Naive thymus-derived CD4-positive, alpha-beta T cell (primary cell): ENCODE measurements at regions of chr17 and their contacts with region 1.

Region 1: GRCh38 chr17:76103274-76104139 is at the start of gene EXOC7:
- DNase-seq: peak; percentile 88 to 96 (median 93)
- ATAC-seq: peak; percentile 96
- H3K4me3 ChIP-seq: peak within 1 kb of the TSS; percentile 72
- H3K4me3 Mint-ChIP-seq: peak within 1 kb of the TSS; percentile 82 to 98 (median 96)
- H3K27ac ChIP-seq: peak within 1 kb of the TSS; percentile 82
- H3K27ac Mint-ChIP-seq: peak within 1 kb of the TSS; percentile 96 to 99 (median 97)
- H3K4me1 ChIP-seq: peaks cover 6 to 16% of the 10 kb centered on the region in 2 donors
- H3K4me1 Mint-ChIP-seq: peaks cover 6 to 47% (median 32%) of the 10 kb centered on the region in 7 donors
- H3K27me3 ChIP-seq: no peaks in the 10 kb centered on the region
- H3K27me3 Mint-ChIP-seq: no peaks in the 10 kb centered on the region
- total RNA-seq, gene EXOC7: 112 to 204 (median 160) TPM

Region 2: DNA sequence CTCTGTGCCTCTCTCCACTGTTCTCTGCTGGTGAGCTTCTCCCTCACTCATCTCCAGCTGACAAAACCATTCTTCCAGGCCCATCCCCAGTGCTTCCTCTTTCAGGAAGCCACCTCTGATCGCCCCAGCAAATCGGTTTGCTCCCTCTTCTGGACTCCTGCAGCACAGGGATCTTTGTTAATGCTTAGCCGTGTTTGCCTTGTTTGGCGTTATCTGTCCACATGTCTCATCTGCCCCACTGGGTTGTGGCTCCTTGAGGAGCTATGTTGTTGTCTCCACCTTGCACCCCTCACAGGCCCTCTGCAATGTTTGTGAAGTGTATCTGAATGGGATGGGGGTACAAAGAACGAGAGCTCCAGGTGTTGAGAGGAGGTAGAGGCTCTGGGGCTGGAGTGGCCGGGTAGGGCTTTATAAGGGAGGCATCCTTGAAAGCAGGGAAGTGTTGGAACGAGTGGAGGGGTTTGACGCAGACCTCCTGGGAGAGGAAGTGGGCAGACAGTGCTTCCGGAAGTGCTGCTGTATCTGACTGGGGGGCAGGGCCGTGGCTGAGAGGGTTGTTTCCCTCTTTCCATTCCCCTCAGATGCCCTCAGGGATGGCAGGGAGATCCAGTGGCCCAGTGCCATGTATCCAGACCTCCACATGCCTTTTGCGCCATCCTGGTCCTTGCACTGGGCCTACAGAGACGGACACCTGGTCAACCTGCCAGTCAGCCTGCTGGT is 616.0 kb before region 1 on chr17:
- CTCF ChIA-PET with region 1: no interaction called
- POLR2A ChIA-PET with region 1: no interaction called
- intact Hi-C with region 1: no loop called
- DNase-seq: peak in 8 of 9 donors; percentile 35 to 67 (median 62)
- ATAC-seq: peak; percentile 83
- H3K4me3 ChIP-seq: peak overlapping the region; percentile 49
- H3K4me3 Mint-ChIP-seq: peak overlapping the region; percentile 75 to 88 (median 80)
- H3K27ac ChIP-seq: peak overlapping the region; percentile 73
- H3K27ac Mint-ChIP-seq: peak overlapping the region; percentile 94 to 98 (median 96)
- H3K4me1 ChIP-seq: peaks cover 16 to 25% of the 10 kb centered on the region in 2 donors
- H3K4me1 Mint-ChIP-seq: peaks cover 18 to 39% (median 24%) of the 10 kb centered on the region in 7 donors
- H3K27me3 ChIP-seq: no peaks in the 10 kb centered on the region
- H3K27me3 Mint-ChIP-seq: no peaks in the 10 kb centered on the region

Region 3: GRCh38 chr17:75896415-75897159 is 206.9 kb before region 1 on chr17 and contains the start of gene TRIM65:
- CTCF ChIA-PET with region 1: no interaction called
- POLR2A ChIA-PET with region 1: no interaction called
- intact Hi-C with region 1: loop called in 1 of 2 experiments (anchors 2 kb)
- DNase-seq: peak; percentile 63 to 87 (median 71)
- ATAC-seq: peak; percentile 91
- H3K4me3 ChIP-seq: peak within 1 kb of the TSS; percentile 65
- H3K4me3 Mint-ChIP-seq: peak within 1 kb of the TSS; percentile 55 to 92 (median 84)
- H3K27ac ChIP-seq: peak within 1 kb of the TSS; percentile 75
- H3K27ac Mint-ChIP-seq: peak within 1 kb of the TSS; percentile 66 to 91 (median 85)
- H3K4me1 ChIP-seq: peaks cover 8 to 12% of the 10 kb centered on the region in 2 donors
- H3K4me1 Mint-ChIP-seq: peaks cover 22 to 32% (median 26%) of the 10 kb centered on the region in 7 donors
- H3K27me3 ChIP-seq: no peaks in the 10 kb centered on the region
- H3K27me3 Mint-ChIP-seq: no peaks in the 10 kb centered on the region
- total RNA-seq, gene TRIM65: 20.9 to 37.7 (median 29.6) TPM

Region 4: GRCh38 chr17:76014184-76014924 is 89.2 kb before region 1 on chr17:
- CTCF ChIA-PET with region 1: interaction called, 13 read pairs
- POLR2A ChIA-PET with region 1: interaction called, 11 read pairs
- intact Hi-C with region 1: loop called in 1 of 2 experiments (anchors 1 kb)
- DNase-seq: peak; percentile 62 to 85 (median 77)
- ATAC-seq: peak; percentile 96
- H3K4me3 ChIP-seq: no peak overlapping the region
- H3K4me3 Mint-ChIP-seq: peak overlapping the region in 3 of 10 donors; percentile 40 to 68 (median 49)
- H3K27ac ChIP-seq: no peak overlapping the region
- H3K27ac Mint-ChIP-seq: peak overlapping the region in 5 of 9 donors; percentile 33 to 62 (median 40)
- H3K4me1 ChIP-seq: peaks cover 3 to 5% of the 10 kb centered on the region in 2 donors
- H3K4me1 Mint-ChIP-seq: peaks cover 0 to 11% (median 8%) of the 10 kb centered on the region in 7 donors
- H3K27me3 ChIP-seq: no peaks in the 10 kb centered on the region
- H3K27me3 Mint-ChIP-seq: no peaks in the 10 kb centered on the region

Region 5: DNA sequence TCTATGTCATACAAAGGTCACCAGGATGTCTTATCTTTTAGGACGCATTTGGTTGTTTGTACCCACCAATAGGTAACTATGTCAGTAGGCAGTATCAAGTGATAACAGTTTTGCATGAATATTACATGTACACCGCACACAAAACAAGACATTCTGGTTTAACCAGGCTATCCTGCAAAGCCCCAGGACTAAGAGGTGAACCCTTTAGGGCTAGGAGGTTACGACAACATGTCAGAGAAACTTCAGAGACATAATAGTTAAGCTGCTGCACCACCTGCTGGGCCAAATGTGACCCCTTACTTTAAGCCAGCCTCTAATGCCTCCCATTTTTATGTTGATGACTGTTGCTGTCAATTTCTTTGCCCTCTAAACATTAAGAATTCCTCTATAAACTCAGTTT is 46.7 kb before region 1 on chr17:
- CTCF ChIA-PET with region 1: no interaction called
- POLR2A ChIA-PET with region 1: no interaction called
- intact Hi-C with region 1: no loop called
- DNase-seq: no peak
- ATAC-seq: no peak
- H3K4me3 ChIP-seq: no peak overlapping the region
- H3K4me3 Mint-ChIP-seq: no peak overlapping the region
- H3K27ac ChIP-seq: no peak overlapping the region
- H3K27ac Mint-ChIP-seq: peak overlapping the region in 3 of 9 donors; percentile 2 to 41 (median 26)
- H3K4me1 ChIP-seq: no peaks in the 10 kb centered on the region
- H3K4me1 Mint-ChIP-seq: peaks cover 0 to 15% (median 5%) of the 10 kb centered on the region in 7 donors
- H3K27me3 ChIP-seq: no peaks in the 10 kb centered on the region
- H3K27me3 Mint-ChIP-seq: no peaks in the 10 kb centered on the region

Region 6: GRCh38 chr17:76072148-76072858 is 31.2 kb before region 1 on chr17 and contains the start of gene SRP68:
- CTCF ChIA-PET with region 1: no interaction called
- POLR2A ChIA-PET with region 1: interaction called, 12 read pairs
- intact Hi-C with region 1: loop called in 1 of 2 experiments (anchors 1 kb)
- DNase-seq: peak; percentile 63 to 86 (median 74)
- ATAC-seq: peak; percentile 92
- H3K4me3 ChIP-seq: peak within 1 kb of the TSS; percentile 89
- H3K4me3 Mint-ChIP-seq: peak within 1 kb of the TSS; percentile 85 to 98 (median 97)
- H3K27ac ChIP-seq: peak within 1 kb of the TSS; percentile 93
- H3K27ac Mint-ChIP-seq: peak within 1 kb of the TSS; percentile 90 to 98 (median 95)
- H3K4me1 ChIP-seq: peaks cover 10 to 37% of the 10 kb centered on the region in 2 donors
- H3K4me1 Mint-ChIP-seq: peaks cover 21 to 62% (median 52%) of the 10 kb centered on the region in 7 donors
- H3K27me3 ChIP-seq: peaks cover 13 to 14% of the 10 kb centered on the region in 2 donors
- H3K27me3 Mint-ChIP-seq: peaks cover 17 to 37% (median 24%) of the 10 kb centered on the region in 5 donors
- total RNA-seq, gene SRP68: 70.8 to 105 (median 91.9) TPM

Region 7: GRCh38 chr17:76121932-76122430 is 18.5 kb after region 1 on chr17:
- CTCF ChIA-PET with region 1: interaction called, 6 read pairs
- POLR2A ChIA-PET with region 1: interaction called, 5 read pairs
- intact Hi-C with region 1: loop called in 1 of 2 experiments (anchors 1 kb)
- DNase-seq: no peak
- ATAC-seq: peak; percentile 33
- H3K4me3 ChIP-seq: peak overlapping the region; percentile 63
- H3K4me3 Mint-ChIP-seq: peak overlapping the region in 7 of 10 donors; percentile 25 to 77 (median 53)
- H3K27ac ChIP-seq: peak overlapping the region; percentile 52
- H3K27ac Mint-ChIP-seq: peak overlapping the region; percentile 40 to 91 (median 73)
- H3K4me1 ChIP-seq: peaks cover 0 to 25% of the 10 kb centered on the region in 2 donors
- H3K4me1 Mint-ChIP-seq: peaks cover 10 to 39% (median 27%) of the 10 kb centered on the region in 7 donors
- H3K27me3 ChIP-seq: no peaks in the 10 kb centered on the region
- H3K27me3 Mint-ChIP-seq: no peaks in the 10 kb centered on the region

Region 8: GRCh38 chr17:76271669-76272540 is 168.4 kb after region 1 on chr17:
- CTCF ChIA-PET with region 1: interaction called, 3 read pairs
- POLR2A ChIA-PET with region 1: interaction called, 10 read pairs
- intact Hi-C with region 1: no loop called
- DNase-seq: peak in 6 of 9 donors; percentile 53 to 79 (median 61)
- ATAC-seq: peak; percentile 54
- H3K4me3 ChIP-seq: peak overlapping the region; percentile 68
- H3K4me3 Mint-ChIP-seq: peak overlapping the region; percentile 75 to 93 (median 82)
- H3K27ac ChIP-seq: peak overlapping the region; percentile 92
- H3K27ac Mint-ChIP-seq: peak overlapping the region; percentile 82 to 94 (median 92)
- H3K4me1 ChIP-seq: peaks cover 65 to 70% of the 10 kb centered on the region in 2 donors
- H3K4me1 Mint-ChIP-seq: peaks cover 37 to 75% (median 71%) of the 10 kb centered on the region in 7 donors
- H3K27me3 ChIP-seq: no peaks in the 10 kb centered on the region
- H3K27me3 Mint-ChIP-seq: peaks cover 0 to 3% (median 0%) of the 10 kb centered on the region in 5 donors

Region 9: DNA sequence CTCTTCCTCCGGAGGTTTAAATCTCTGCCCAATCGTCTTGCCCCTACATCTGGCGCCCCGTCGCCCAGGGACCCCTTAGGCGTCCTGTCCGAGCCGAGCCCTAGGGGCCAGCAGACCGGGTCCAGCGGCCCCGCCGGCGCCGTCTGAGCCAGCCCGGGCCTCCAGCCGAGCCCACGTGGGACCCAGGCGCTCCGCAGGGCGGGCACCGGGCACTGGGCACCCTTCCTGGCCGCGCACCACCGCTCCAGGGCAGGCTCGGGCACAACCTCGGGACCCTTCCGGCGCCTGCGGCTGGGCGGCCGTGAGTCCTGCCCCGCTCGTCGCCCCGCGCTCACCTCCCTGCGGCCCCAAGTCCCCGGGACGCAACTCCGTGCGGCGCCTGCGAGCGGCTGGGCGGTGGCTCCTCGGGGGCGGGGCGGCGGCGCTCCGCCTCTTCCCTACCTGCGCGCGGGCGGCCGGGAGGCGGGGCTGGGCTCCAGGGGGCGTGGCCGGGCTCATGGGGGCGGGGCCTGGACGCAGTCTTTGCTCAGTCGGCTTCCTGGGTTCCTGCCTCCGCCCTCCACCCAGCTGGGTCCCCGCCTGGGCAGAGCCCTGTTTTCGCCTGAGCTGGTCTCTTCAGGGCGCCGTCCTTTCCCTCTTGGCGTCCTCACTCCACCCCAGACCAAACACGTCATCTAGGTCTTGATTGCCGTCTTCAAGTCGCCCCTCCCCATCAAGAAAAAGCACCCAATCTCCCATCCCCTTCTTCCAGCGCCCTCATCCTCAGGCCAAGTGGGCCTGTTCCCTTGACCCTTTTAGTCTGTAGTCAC is 397.7 kb after region 1 on chr17 and contains the start of gene RHBDF2:
- CTCF ChIA-PET with region 1: no interaction called
- POLR2A ChIA-PET with region 1: no interaction called
- intact Hi-C with region 1: loop called in 1 of 2 experiments (anchors 10 kb)
- DNase-seq: peak; percentile 90 to 100 (median 95)
- ATAC-seq: peak; percentile 99
- H3K4me3 ChIP-seq: peak within 1 kb of the TSS; percentile 62
- H3K4me3 Mint-ChIP-seq: peak within 1 kb of the TSS; percentile 82 to 91 (median 86)
- H3K27ac ChIP-seq: peak within 1 kb of the TSS; percentile 73
- H3K27ac Mint-ChIP-seq: peak within 1 kb of the TSS; percentile 95 to 99 (median 97)
- H3K4me1 ChIP-seq: peaks cover 22 to 44% of the 10 kb centered on the region in 2 donors
- H3K4me1 Mint-ChIP-seq: peaks cover 17 to 61% (median 35%) of the 10 kb centered on the region in 7 donors
- H3K27me3 ChIP-seq: no peaks in the 10 kb centered on the region
- H3K27me3 Mint-ChIP-seq: no peaks in the 10 kb centered on the region
- total RNA-seq, gene RHBDF2: 31.1 to 119 (median 35.4) TPM